T-cell (primary cell): ENCODE measurements at regions of chr16 and their contacts with region 1.

Region 1: GRCh38 chr16:17194190-17194780 is 276.5 kb downstream of the XYLT1 start:
- DNase-seq: peak in 33 of 35 experiments; percentile 14 to 76 (median 46)
- ATAC-seq: peak in 3 of 4 experiments; percentile 52 to 63 (median 56)
- H3K4me3 ChIP-seq: no peak overlapping the region
- H3K4me3 Mint-ChIP-seq: no peak overlapping the region
- H3K27ac ChIP-seq: no peak overlapping the region
- H3K27ac Mint-ChIP-seq: no peak overlapping the region
- H3K4me1 ChIP-seq: peaks cover 0 to 5% of the 10 kb centered on the region in 2 experiments
- H3K4me1 Mint-ChIP-seq: peaks cover 0 to 3% (median 2%) of the 10 kb centered on the region in 3 donors
- H3K27me3 ChIP-seq: no peaks in the 10 kb centered on the region
- H3K27me3 Mint-ChIP-seq: no peaks in the 10 kb centered on the region

Region 2: DNA sequence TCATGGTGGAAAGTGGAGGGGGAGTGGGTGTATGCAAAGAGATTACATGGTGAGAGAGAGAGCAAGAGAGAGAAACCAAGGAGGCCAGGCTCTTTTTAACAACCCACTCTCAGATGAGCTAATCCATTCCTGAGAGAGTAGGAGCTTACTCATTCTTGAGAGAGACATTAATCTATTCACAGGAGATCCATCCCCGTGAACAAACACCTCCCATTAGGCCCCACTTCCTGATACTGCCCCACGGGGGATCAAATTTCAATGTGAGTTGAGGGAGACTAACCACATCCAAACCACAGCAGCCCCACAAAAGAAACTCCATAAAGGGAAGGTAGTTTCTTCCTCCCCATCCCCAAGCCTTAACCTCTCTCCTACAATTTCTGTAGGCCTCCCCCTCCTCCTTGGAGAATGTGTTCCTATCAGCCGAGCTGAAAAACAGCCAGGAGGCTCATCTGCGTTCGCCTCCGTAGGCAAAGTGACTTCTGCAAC is 365.3 kb before region 1 on chr16:
- CTCF ChIA-PET with region 1: interaction called in 1 of 2 experiments, 10 read pairs
- POLR2A ChIA-PET with region 1: no interaction called
- DNase-seq: no peak
- ATAC-seq: no peak
- H3K4me3 ChIP-seq: no peak overlapping the region
- H3K4me3 Mint-ChIP-seq: no peak overlapping the region
- H3K27ac ChIP-seq: no peak overlapping the region
- H3K27ac Mint-ChIP-seq: no peak overlapping the region
- H3K4me1 ChIP-seq: no peaks in the 10 kb centered on the region
- H3K4me1 Mint-ChIP-seq: no peaks in the 10 kb centered on the region
- H3K27me3 ChIP-seq: peaks cover 0 to 2% of the 10 kb centered on the region in 2 experiments
- H3K27me3 Mint-ChIP-seq: peaks cover 26 to 37% of the 10 kb centered on the region in 2 donors